ENCODE measurements at regions of chr6 and their contacts with region 1.

Region 1: GRCh38 chr6:12614456-12614855 is 102.1 kb upstream of the PHACTR1 start:
- DNase-seq: no peak

Region 2: GRCh38 chr6:11653028-11653583 is 961.4 kb before region 1 on chr6:
- intact Hi-C with region 1: loop called (anchors 10 kb)
- DNase-seq: peak in 1 of 42 donors; percentile 12

Region 3: DNA sequence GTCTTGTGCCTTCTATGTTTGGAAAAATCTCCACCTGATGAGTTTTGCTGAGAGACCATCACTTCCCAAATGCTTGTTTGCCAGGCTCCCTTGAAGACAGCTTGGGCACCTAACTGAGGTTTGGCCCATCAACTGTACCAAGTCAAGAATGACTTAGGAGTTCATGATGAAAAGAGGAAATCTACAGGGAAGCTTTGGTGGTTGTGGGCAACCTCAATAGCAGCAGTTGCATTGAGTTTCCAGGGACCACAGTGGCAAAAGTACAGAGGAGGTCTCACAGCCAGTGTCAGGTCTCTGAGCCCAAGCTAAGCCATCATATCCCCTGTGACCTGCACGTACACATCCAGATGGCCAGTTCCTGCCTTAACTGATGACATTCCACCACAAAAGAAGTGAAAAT is 52.4 kb after region 1 on chr6:
- intact Hi-C with region 1: no loop called
- DNase-seq: no peak

Region 4: GRCh38 chr6:13089296-13089994 is 475.0 kb after region 1 on chr6:
- intact Hi-C with region 1: no loop called
- DNase-seq: no peak

Measured in head of caudate nucleus (tissue), 42 donors.